Naive thymus-derived CD4-positive, alpha-beta T cell (primary cell): ENCODE measurements at regions of chr5 and their contacts with region 1.

Region 1: GRCh38 chr5:76269932-76270610 is 133.0 kb upstream of the IQGAP2 start:
- DNase-seq: peak in 1 of 9 donors; percentile 44
- ATAC-seq: peak; percentile 22
- H3K4me3 ChIP-seq: no peak overlapping the region
- H3K4me3 Mint-ChIP-seq: peak overlapping the region in 1 of 10 donors; percentile 77
- H3K27ac ChIP-seq: no peak overlapping the region
- H3K27ac Mint-ChIP-seq: peak overlapping the region in 1 of 9 donors; percentile 89
- H3K4me1 ChIP-seq: no peaks in the 10 kb centered on the region
- H3K4me1 Mint-ChIP-seq: peaks cover 0 to 42% (median 4%) of the 10 kb centered on the region in 7 donors
- H3K27me3 ChIP-seq: no peaks in the 10 kb centered on the region
- H3K27me3 Mint-ChIP-seq: peaks cover 0 to 6% (median 4%) of the 10 kb centered on the region in 5 donors

Region 2: DNA sequence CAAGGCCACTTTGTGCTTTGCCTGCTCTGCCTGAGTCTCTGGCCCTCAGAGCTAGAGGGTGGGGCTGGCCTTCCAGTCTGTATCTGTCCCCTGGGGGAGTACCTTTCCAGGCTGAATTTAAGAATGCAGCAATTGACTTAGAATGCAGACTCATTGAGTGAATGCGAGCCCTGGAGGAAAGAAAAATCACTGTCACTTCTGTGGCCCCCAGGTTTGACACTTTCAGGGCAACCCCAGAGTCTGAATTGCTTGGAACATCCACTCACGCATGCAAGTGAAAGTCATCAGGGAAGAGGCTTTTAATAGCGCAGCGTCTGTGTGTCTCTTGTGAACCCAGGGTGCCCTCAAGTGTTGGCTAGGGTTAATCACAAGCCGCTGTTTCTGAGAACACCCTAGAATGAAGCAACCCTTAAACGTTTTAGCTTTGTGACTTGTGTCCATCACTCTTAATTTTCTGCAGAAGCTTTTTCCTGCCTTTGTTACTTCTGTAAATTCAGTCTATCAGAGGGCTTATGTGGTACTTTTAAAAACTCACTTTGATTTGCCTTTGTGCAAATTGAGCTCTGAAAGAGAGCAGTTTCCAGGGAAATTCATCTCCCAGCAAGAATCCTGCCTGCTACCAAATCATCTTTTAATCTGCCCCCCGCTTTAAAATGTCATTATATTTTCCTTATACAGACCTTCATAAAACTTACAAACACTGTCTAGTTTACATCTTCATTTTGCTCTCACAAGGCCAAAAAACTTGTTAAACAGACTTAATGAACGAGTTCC is 13.8 kb before region 1 on chr5:
- CTCF ChIA-PET with region 1: no interaction called
- POLR2A ChIA-PET with region 1: no interaction called
- intact Hi-C with region 1: no loop called
- DNase-seq: peak; percentile 20 to 70 (median 56)
- ATAC-seq: peak; percentile 96
- H3K4me3 ChIP-seq: no peak overlapping the region
- H3K4me3 Mint-ChIP-seq: peak overlapping the region in 4 of 10 donors; percentile 23 to 45 (median 42)
- H3K27ac ChIP-seq: no peak overlapping the region
- H3K27ac Mint-ChIP-seq: peak overlapping the region in 3 of 9 donors; percentile 8 to 23 (median 11)
- H3K4me1 ChIP-seq: no peaks in the 10 kb centered on the region
- H3K4me1 Mint-ChIP-seq: peaks cover 0 to 12% (median 3%) of the 10 kb centered on the region in 7 donors
- H3K27me3 ChIP-seq: no peaks in the 10 kb centered on the region
- H3K27me3 Mint-ChIP-seq: peaks cover 4 to 36% (median 4%) of the 10 kb centered on the region in 5 donors

Region 3: DNA sequence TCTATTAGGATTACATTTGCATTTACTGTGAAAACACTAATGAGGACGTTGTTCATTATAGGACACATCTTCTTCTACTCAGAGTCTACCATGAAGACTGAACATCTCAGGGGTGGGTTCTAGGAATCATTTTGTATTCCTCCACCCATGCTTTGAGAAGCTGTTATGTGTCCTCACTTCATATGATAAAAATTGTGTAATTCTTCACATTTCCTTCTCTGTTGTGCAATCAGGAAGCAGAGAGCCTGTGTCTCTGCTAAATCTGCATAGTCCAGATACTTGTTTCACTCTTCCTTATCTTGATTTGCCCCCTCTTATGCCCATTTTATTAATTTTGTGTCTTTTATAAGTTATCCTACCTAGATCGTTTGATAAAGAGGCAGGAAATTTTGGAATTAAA is 35.2 kb after region 1 on chr5:
- CTCF ChIA-PET with region 1: interaction called, 3 read pairs
- POLR2A ChIA-PET with region 1: no interaction called
- intact Hi-C with region 1: loop called in 1 of 2 experiments (anchors 5 kb)
- DNase-seq: no peak
- ATAC-seq: peak; percentile 46
- H3K4me3 ChIP-seq: no peak overlapping the region
- H3K4me3 Mint-ChIP-seq: no peak overlapping the region
- H3K27ac ChIP-seq: no peak overlapping the region
- H3K27ac Mint-ChIP-seq: no peak overlapping the region
- H3K4me1 ChIP-seq: peaks cover 8 to 10% of the 10 kb centered on the region in 2 donors
- H3K4me1 Mint-ChIP-seq: peaks cover 10 to 48% (median 19%) of the 10 kb centered on the region in 7 donors
- H3K27me3 ChIP-seq: no peaks in the 10 kb centered on the region
- H3K27me3 Mint-ChIP-seq: peaks cover 0 to 6% (median 0%) of the 10 kb centered on the region in 5 donors

Region 4: DNA sequence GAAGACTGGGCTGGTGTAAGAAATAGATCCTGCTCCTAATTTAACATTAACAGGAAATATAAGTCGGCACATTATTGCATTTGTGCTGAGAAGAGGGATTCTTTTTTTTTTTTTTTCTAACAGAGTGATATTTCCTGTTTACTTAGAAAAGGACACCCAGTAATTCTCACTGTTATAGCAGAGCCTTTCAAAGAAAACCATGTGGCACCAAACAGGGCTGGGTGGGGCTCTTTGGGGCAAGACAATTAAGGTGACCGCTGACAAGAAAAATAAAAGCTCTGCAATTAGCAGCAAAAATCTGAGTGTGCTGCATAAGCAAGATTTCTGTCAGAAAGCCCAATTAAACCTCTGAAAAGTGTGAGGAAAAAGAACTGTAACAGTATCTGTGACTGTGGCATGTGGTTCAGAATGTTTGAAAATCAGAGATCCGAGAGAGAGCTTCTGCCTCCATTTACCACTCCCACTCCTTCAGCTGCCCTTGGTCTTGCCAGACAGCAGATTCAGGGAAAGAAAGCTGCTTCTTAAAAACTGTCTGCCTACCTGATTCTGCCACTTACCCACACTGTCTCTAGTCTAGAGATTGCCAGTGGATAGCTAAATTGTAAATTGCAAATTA is 55.9 kb after region 1 on chr5:
- CTCF ChIA-PET with region 1: no interaction called
- POLR2A ChIA-PET with region 1: no interaction called
- intact Hi-C with region 1: loop called in 1 of 2 experiments (anchors 1 kb)
- DNase-seq: peak in 6 of 9 donors; percentile 30 to 63 (median 48)
- ATAC-seq: peak; percentile 90
- H3K4me3 ChIP-seq: peak overlapping the region; percentile 22
- H3K4me3 Mint-ChIP-seq: peak overlapping the region; percentile 71 to 84 (median 76)
- H3K27ac ChIP-seq: peak overlapping the region; percentile 59
- H3K27ac Mint-ChIP-seq: peak overlapping the region; percentile 88 to 98 (median 93)
- H3K4me1 ChIP-seq: peaks cover 31 to 57% of the 10 kb centered on the region in 2 donors
- H3K4me1 Mint-ChIP-seq: peaks cover 46 to 75% (median 58%) of the 10 kb centered on the region in 7 donors
- H3K27me3 ChIP-seq: no peaks in the 10 kb centered on the region
- H3K27me3 Mint-ChIP-seq: no peaks in the 10 kb centered on the region